ENCODE measurements at regions of chr1 and their contacts with region 1.

Region 1: GRCh38 chr1:204806943-204807687 is 63.5 kb upstream of the NFASC start:
- DNase-seq: peak; percentile 88
- H3K4me3 Mint-ChIP-seq: peak overlapping the region; percentile 74
- H3K27ac Mint-ChIP-seq: peak overlapping the region; percentile 78
- H3K4me1 Mint-ChIP-seq: peaks cover 22% of the 10 kb centered on the region
- H3K27me3 Mint-ChIP-seq: peaks cover 3% of the 10 kb centered on the region

Region 2: GRCh38 chr1:204438628-204439027 is 368.5 kb before region 1 on chr1:
- CTCF ChIA-PET with region 1: interaction called, 13 read pairs
- POLR2A ChIA-PET with region 1: no interaction called
- DNase-seq: no peak
- H3K4me3 Mint-ChIP-seq: no peak overlapping the region
- H3K27ac Mint-ChIP-seq: no peak overlapping the region
- H3K4me1 Mint-ChIP-seq: peaks cover 2% of the 10 kb centered on the region
- H3K27me3 Mint-ChIP-seq: no peaks in the 10 kb centered on the region

Region 3: DNA sequence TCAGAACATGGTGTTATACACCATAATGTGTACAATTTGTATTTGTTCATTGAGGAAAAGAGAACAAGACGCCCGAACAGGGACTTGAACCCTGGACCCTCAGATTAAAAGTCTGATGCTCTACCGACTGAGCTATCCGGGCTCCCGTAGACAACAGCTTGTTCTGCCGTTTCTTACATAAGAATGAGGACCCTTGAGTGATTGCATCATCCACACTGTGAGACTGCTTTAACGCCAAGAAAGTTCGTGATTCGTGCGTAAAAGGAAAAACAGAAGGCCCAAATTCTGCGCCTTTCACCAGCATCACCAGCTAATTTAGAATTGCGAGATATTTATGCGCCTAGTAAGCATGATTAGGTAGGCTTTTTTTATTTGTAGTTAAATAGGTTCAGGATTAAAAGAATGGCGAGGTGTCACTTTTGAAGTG is 300.1 kb before region 1 on chr1:
- CTCF ChIA-PET with region 1: interaction called, 15 read pairs
- POLR2A ChIA-PET with region 1: no interaction called
- DNase-seq: peak; percentile 91
- H3K4me3 Mint-ChIP-seq: peak overlapping the region; percentile 87
- H3K27ac Mint-ChIP-seq: peak overlapping the region; percentile 98
- H3K4me1 Mint-ChIP-seq: peaks cover 45% of the 10 kb centered on the region
- H3K27me3 Mint-ChIP-seq: peaks cover 2% of the 10 kb centered on the region

Region 4: DNA sequence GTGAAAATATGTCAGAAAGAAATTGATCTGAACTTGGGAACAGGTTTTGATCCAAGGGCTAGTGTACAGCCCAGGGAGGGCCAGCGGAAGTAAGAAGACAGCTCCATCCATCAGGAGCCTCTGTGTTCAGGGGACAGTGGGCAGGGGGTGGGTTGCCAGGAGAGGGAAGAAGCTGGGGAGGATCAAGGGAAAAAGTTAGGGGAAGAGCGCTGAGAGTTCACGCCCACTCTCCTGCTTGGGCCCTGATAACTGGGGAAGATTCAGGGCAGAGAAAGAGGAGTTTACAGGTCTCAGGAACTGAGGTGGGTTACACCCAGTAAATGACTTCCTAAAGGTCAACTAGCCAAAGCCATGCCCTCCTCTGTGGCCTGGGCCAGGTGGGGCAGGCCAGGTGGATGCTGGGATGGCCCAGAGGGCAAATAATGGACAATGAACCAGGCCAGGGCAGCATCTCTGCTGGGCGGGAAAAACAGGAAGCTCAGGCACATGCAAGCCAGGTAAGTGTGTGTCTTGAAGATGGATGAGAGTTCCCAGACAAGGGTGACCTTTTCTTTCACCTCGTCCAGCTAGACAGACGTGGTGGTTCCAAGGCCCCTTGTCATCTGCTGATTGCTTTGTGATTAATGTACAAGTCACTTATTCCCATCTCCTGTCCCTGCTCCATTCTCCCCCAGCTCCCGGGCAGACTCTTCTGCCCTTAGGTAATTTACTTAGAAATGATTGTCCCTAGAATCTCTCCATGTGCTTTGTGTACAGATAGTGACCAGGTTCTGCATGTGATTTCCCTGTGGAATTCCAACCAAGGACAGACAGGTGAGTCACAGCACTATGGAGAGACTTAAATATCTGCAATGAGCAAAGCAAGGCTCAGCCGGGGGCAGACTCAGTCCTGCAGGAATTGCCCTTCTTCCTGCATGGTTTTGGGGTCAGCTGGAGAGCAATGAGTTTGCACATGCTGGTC is 233.9 kb before region 1 on chr1:
- CTCF ChIA-PET with region 1: interaction called, 11 read pairs
- POLR2A ChIA-PET with region 1: no interaction called
- DNase-seq: no peak
- H3K4me3 Mint-ChIP-seq: no peak overlapping the region
- H3K27ac Mint-ChIP-seq: peak overlapping the region; percentile 4
- H3K4me1 Mint-ChIP-seq: peaks cover 18% of the 10 kb centered on the region
- H3K27me3 Mint-ChIP-seq: no peaks in the 10 kb centered on the region

Region 5: GRCh38 chr1:204780630-204781029 is 26.5 kb before region 1 on chr1:
- CTCF ChIA-PET with region 1: interaction called, 12 read pairs
- POLR2A ChIA-PET with region 1: no interaction called
- DNase-seq: no peak
- H3K4me3 Mint-ChIP-seq: no peak overlapping the region
- H3K27ac Mint-ChIP-seq: no peak overlapping the region
- H3K4me1 Mint-ChIP-seq: no peaks in the 10 kb centered on the region
- H3K27me3 Mint-ChIP-seq: peaks cover 20% of the 10 kb centered on the region

Region 6: DNA sequence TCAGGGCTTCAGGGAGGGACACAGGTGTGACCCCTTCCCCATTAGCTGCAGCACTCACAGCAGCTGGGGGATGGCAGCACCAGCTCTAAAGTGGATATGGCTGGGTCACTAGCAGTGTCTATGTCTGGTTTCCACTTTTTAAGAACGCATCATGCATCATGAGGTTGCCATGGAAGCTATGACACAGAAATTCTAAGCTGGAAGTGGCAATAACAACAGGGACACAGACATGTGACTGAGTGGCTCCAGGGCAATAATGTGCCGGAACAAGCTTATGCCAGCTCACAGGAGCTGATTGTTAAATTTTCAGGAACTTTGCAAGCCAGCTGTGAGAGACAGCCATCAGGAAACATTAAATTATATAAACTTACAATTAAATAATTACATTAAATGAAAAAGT is 12.4 kb after region 1 on chr1:
- CTCF ChIA-PET with region 1: interaction called, 42 read pairs
- POLR2A ChIA-PET with region 1: no interaction called
- DNase-seq: no peak
- H3K4me3 Mint-ChIP-seq: no peak overlapping the region
- H3K27ac Mint-ChIP-seq: no peak overlapping the region
- H3K4me1 Mint-ChIP-seq: no peaks in the 10 kb centered on the region
- H3K27me3 Mint-ChIP-seq: peaks cover 16% of the 10 kb centered on the region

Measured in activated CD4-positive, alpha-beta T cell treated with anti-CD3 and anti-CD28 coated beads, Interleukin-2, amount 10 ng/mL, durations not matched to agents 7 days and 5 days (primary cell).